Pancreas (tissue), 10 donors: ENCODE measurements at regions of chr2 and their contacts with region 1.

Region 1: DNA sequence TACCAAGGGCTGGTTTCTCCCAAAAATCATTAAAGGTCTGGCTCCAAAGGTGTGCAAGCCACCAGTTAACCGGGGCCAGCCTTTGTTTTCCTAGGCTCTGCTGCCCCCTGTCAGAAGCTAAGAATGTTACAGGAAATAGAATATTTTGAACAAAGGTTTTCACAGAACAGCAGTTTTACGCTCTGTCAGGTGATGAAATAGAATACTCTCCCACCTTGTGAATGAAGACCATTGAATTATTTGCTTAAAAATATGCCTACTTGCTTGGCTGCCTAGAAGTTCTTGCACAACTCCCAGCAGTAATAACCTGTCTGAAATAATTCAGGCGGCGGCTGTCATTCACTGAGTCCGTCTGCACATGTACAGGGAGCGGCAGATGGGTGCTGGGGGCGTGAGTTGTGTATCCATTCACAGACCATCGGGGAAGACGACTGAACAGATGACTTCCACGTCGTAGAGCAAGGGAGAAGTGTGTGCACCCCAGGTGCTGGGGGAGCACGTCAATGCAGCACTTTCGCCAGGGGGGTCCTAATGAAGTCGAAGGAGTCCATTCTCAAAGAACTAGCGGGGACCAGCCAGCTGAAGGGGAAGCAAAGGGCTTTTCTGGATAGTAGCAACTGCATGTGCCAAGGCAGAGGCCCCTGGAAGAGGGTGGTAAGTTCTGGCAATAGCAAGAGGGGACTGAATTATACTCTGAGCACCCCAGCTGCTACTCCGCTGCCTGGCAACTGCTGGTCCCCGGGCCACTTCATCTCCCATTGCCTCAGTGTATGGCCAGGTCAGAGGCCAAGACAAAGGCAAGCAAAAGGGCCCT is 56.1 kb downstream of the SF3B1 start:
- DNase-seq: peak in 4 of 6 donors; percentile 23 to 59 (median 32)
- ATAC-seq: peak; percentile 81 to 98 (median 94)
- H3K4me3 ChIP-seq: no peak overlapping the region
- H3K27ac ChIP-seq: no peak overlapping the region
- H3K4me1 ChIP-seq: peaks cover 0 to 3% (median 0%) of the 10 kb centered on the region in 3 donors
- H3K27me3 ChIP-seq: no peaks in the 10 kb centered on the region
- CTCF ChIP-seq: peak; percentile 8 to 67 (median 52)

Region 2: DNA sequence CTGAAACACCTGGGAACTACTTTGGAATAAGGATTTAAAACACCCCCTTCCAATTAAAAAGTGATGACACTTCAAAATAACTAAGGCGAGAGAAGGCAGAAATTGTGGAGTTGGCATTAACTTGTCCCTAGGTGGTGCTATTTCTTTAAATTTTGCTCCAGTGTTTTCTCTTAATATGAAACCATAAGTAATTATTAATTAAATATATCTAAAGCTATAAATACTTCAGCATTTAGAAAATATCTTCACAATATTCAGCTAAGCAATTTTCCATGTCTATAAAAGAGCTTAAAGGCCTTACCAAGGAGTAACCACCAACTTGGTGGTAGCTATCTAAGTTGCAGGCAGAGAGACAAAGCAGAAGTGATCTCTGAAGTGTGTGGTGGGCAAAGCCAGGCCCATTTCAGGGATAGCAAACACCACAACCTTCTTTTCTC is 265.4 kb before region 1 on chr2:
- intact Hi-C with region 1: loop called in 2 of 3 experiments (anchors 10 kb)
- DNase-seq: no peak
- ATAC-seq: peak in 3 of 4 donors; percentile 54 to 73 (median 59)
- H3K4me3 ChIP-seq: no peak overlapping the region
- H3K27ac ChIP-seq: no peak overlapping the region
- H3K4me1 ChIP-seq: no peaks in the 10 kb centered on the region
- H3K27me3 ChIP-seq: no peaks in the 10 kb centered on the region
- CTCF ChIP-seq: peak in 3 of 4 donors; percentile 36 to 50 (median 45)

Region 3: GRCh38 chr2:197184959-197185586 is 193.6 kb before region 1 on chr2:
- intact Hi-C with region 1: loop called in 2 of 3 experiments (anchors 5 kb)
- DNase-seq: peak; percentile 54 to 87 (median 72)
- ATAC-seq: peak; percentile 70 to 91 (median 86)
- H3K4me3 ChIP-seq: no peak overlapping the region
- H3K27ac ChIP-seq: no peak overlapping the region
- H3K4me1 ChIP-seq: peaks cover 0 to 6% (median 0%) of the 10 kb centered on the region in 3 donors
- H3K27me3 ChIP-seq: no peaks in the 10 kb centered on the region
- CTCF ChIP-seq: no peak

Region 4: GRCh38 chr2:197975931-197976519 is 597.3 kb after region 1 on chr2:
- intact Hi-C with region 1: no loop called
- DNase-seq: no peak
- ATAC-seq: no peak
- H3K4me3 ChIP-seq: no peak overlapping the region
- H3K27ac ChIP-seq: no peak overlapping the region
- H3K4me1 ChIP-seq: peaks cover 0 to 8% (median 0%) of the 10 kb centered on the region in 3 donors
- H3K27me3 ChIP-seq: no peaks in the 10 kb centered on the region
- CTCF ChIP-seq: no peak